Heart right ventricle (tissue), 16 donors: ENCODE measurements at regions of chr11 and their contacts with region 1.

Region 1: GRCh38 chr11:108703916-108704315 is 39.0 kb downstream of the DDX10 start:
- DNase-seq: no peak
- ATAC-seq: no peak
- H3K4me3 ChIP-seq: no peak overlapping the region
- H3K27ac ChIP-seq: no peak overlapping the region
- H3K4me1 ChIP-seq: no peaks in the 10 kb centered on the region
- H3K27me3 ChIP-seq: no peaks in the 10 kb centered on the region
- CTCF ChIP-seq: no peak

Region 2: GRCh38 chr11:108853864-108854263 is 149.9 kb after region 1 on chr11:
- intact Hi-C with region 1: loop called in 1 of 10 experiments (anchors 5 kb)
- DNase-seq: peak; percentile 11 to 17
- ATAC-seq: peak; percentile 23 to 75 (median 52)
- H3K4me3 ChIP-seq: peak overlapping the region in 8 of 10 donors; percentile 5 to 42 (median 33)
- H3K27ac ChIP-seq: peak overlapping the region in 9 of 10 donors; percentile 22 to 79 (median 76)
- H3K4me1 ChIP-seq: peaks cover 4 to 47% (median 31%) of the 10 kb centered on the region in 9 donors
- H3K27me3 ChIP-seq: no peaks in the 10 kb centered on the region
- CTCF ChIP-seq: no peak

Region 3: DNA sequence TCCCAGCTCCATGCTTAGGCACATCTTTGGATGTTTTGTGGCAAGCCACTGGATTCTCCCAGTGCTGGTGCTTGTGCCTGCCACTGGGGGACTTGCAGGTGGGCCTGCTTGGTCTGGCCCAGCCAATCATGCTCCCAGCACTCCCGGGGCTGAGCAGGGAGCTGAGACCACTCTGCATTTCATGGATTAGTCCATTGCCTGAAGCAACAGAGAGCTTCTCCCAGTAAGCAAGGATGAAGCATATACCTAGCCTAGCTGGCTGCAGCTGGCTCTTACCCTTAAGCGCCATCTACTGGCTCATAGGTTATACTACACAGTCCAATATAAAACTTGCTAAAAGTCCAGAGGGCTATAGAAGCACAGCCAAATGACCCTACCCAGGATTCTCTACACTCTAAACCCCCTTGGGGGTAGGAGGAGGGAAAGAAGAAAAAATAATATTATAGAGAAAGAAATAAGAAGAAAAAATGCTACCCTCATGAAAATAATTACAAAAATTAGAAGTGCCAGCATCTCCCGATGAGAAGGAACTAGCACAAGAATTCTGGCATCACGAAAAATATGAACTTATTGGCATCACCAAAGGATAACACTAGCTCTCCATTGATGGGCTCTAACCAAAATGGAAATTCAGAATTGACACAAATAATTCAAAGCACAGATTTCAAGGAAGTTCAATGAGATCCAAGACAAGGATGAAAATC is 993.4 kb after region 1 on chr11:
- intact Hi-C with region 1: loop called in 7 of 10 experiments (anchors 2 to 10 kb)
- DNase-seq: no peak
- ATAC-seq: peak in 5 of 8 donors; percentile 47 to 69 (median 59)
- H3K4me3 ChIP-seq: no peak overlapping the region
- H3K27ac ChIP-seq: no peak overlapping the region
- H3K4me1 ChIP-seq: no peaks in the 10 kb centered on the region
- H3K27me3 ChIP-seq: no peaks in the 10 kb centered on the region
- CTCF ChIP-seq: peak; percentile 28 to 69 (median 52)

Region 4: DNA sequence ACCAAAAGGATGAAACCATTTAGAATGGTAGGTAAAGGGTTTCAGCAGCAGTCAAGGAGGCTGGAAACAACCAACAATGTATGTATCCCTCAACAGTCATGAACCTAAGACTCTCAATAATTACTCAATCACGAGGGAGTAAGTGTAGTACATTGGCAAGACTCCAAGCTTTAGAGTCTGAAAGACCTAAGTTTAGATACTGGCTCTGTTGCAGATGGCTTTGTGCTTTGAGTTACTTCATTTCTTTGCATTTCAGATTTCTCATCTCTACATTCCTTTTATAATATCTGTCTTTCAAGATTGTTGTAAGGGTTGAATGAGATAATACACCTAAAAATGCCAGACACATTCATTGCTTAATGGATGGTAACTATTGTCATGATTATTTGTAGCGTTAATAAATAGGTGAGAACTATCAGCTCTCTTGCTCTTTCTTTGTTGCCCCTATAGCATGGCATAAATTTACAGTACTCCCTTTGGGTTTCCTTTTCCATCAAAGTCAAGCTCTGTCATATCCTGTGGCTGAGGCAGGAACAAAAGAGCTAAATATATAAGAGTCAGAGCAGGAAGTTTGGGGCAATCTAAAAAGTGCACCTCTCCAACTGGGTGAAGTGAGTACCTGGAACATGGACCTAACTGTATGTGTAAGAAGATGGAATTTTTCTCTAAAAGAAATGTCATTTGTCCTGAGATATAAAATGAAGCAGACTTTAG is 1161.1 kb after region 1 on chr11:
- intact Hi-C with region 1: loop called in 7 of 10 experiments (anchors 5 to 10 kb)
- DNase-seq: no peak
- ATAC-seq: no peak
- H3K4me3 ChIP-seq: no peak overlapping the region
- H3K27ac ChIP-seq: no peak overlapping the region
- H3K4me1 ChIP-seq: peaks cover 0 to 15% (median 0%) of the 10 kb centered on the region in 9 donors
- H3K27me3 ChIP-seq: no peaks in the 10 kb centered on the region
- CTCF ChIP-seq: no peak

Region 5: GRCh38 chr11:109939166-109939810 is 1235.4 kb after region 1 on chr11:
- intact Hi-C with region 1: loop called in 8 of 10 experiments (anchors 2 to 10 kb)
- DNase-seq: peak in 1 of 2 donors; percentile 40
- ATAC-seq: peak; percentile 59 to 85 (median 72)
- H3K4me3 ChIP-seq: no peak overlapping the region
- H3K27ac ChIP-seq: no peak overlapping the region
- H3K4me1 ChIP-seq: peaks cover 0 to 4% (median 0%) of the 10 kb centered on the region in 9 donors
- H3K27me3 ChIP-seq: no peaks in the 10 kb centered on the region
- CTCF ChIP-seq: peak in 7 of 9 donors; percentile 43 to 67 (median 55)